CD14-positive monocyte (primary cell): ENCODE measurements at regions of chr20 and their contacts with region 1.

Region 1: DNA sequence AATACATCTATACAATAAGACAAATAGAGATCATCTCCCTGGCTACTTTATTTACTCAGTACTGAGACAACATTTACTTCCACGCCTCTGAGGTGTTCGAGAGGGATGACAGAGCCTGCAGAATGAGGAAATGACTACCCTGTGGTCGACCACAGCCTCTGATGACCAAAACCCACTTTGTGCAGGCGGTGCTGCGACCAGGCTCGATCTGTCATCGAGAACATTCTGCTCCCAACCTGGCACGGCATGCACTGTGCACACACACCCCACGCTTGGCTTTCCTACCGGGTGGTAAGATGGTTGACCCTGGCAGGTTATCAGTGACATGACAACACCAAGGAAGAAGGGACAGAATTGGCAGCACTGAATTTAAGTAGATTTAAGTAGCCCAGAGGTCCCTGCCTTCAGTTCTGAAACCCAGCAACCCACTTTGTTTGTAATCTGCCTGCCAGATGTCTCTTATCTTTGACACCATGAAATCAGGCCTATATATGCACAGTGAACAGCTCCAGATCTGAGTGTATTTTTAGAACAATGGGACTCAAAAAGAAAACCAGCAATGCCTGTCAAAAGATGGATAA is 42.6 kb downstream of the TTI1 start:
- DNase-seq: peak; percentile 90 to 95 (median 92)
- H3K4me3 ChIP-seq: no peak overlapping the region
- H3K4me3 Mint-ChIP-seq: peak overlapping the region; percentile 29 to 62
- H3K27ac ChIP-seq: peak overlapping the region in 1 of 2 donors; percentile 84
- H3K27ac Mint-ChIP-seq: peak overlapping the region; percentile 89 to 97 (median 94)
- H3K4me1 ChIP-seq: peaks cover 29 to 30% of the 10 kb centered on the region in 2 donors
- H3K4me1 Mint-ChIP-seq: peaks cover 32% of the 10 kb centered on the region
- H3K27me3 ChIP-seq: no peaks in the 10 kb centered on the region
- H3K27me3 Mint-ChIP-seq: peaks cover 0 to 3% (median 1%) of the 10 kb centered on the region in 3 donors
- CTCF ChIP-seq: no peak

Region 2: GRCh38 chr20:37564388-37565133 is 426.1 kb before region 1 on chr20:
- intact Hi-C with region 1: loop called (anchors 5 to 10 kb)
- DNase-seq: peak in 2 of 3 donors; percentile 15 to 23
- H3K4me3 ChIP-seq: no peak overlapping the region
- H3K4me3 Mint-ChIP-seq: peak overlapping the region in 1 of 2 donors; percentile 68
- H3K27ac ChIP-seq: no peak overlapping the region
- H3K27ac Mint-ChIP-seq: no peak overlapping the region
- H3K4me1 ChIP-seq: no peaks in the 10 kb centered on the region
- H3K4me1 Mint-ChIP-seq: peaks cover 6% of the 10 kb centered on the region
- H3K27me3 ChIP-seq: peaks cover 9 to 38% of the 10 kb centered on the region in 2 donors
- H3K27me3 Mint-ChIP-seq: peaks cover 40 to 71% (median 41%) of the 10 kb centered on the region in 3 donors
- CTCF ChIP-seq: peak; percentile 93